Left colon (tissue), 2 donors: ENCODE measurements at regions of chr5 and their contacts with region 1.

Region 1: DNA sequence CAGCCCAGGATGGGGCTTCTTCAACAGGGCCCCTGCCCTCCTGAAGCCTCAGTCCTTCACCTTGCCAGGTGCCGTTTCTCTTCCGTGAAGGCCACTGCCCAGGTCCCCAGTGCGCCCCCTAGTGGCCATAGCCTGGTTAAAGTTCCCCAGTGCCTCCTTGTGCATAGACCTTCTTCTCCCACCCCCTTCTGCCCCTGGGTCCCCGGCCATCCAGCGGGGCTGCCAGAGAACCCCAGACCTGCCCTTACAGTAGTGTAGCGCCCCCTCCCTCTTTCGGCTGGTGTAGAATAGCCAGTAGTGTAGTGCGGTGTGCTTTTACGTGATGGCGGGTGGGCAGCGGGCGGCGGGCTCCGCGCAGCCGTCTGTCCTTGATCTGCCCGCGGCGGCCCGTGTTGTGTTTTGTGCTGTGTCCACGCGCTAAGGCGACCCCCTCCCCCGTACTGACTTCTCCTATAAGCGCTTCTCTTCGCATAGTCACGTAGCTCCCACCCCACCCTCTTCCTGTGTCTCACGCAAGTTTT is 23.6 kb downstream of the PCDHGC5 start:
- DNase-seq: peak; percentile 84 to 94
- ATAC-seq: peak; percentile 77

Region 2: DNA sequence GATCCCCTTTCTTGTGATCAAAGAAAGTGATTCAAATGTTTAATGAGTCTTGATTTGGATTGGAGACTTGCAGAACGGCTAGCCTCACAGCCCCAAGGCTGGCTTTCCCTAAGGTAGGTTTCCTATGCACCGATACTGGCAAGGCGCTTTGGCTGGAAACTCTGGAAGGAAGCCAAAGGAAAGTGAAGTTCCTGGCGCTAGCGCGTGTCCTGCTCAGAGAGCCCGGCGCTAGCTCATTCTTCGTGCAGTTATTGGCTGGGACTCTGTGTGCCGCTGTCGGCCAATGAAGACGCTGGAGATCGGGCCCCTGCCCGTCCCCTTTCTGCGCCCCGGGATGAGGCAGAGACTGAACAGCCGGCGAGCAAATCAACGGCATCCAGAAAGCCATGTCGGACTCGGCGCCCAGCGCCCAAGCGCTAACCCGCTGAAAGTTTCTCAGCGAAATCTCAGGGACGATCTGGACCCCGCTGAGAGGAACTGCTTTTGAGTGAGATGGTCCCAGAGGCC is 36.8 kb before region 1 on chr5 and contains the start of gene PCDHGC3:
- intact Hi-C with region 1: loop called in 1 of 2 experiments (anchors 5 kb)
- DNase-seq: peak; percentile 86 to 93
- ATAC-seq: peak; percentile 96
- total RNA-seq, gene PCDHGC3: 15.3 to 16.0 TPM

Region 3: GRCh38 chr5:141547488-141547887 is 35.0 kb after region 1 on chr5:
- intact Hi-C with region 1: no loop called
- DNase-seq: no peak
- ATAC-seq: no peak

Region 4: GRCh38 chr5:141617128-141617527 is 104.7 kb after region 1 on chr5:
- intact Hi-C with region 1: no loop called
- DNase-seq: no peak
- ATAC-seq: no peak